Naive thymus-derived CD4-positive, alpha-beta T cell (primary cell): ENCODE measurements at regions of chr14 and their contacts with region 1.

Region 1: GRCh38 chr14:65847075-65847847 is 434.7 kb downstream of the FUT8 start:
- DNase-seq: peak in 8 of 9 donors; percentile 67 to 94 (median 90)
- ATAC-seq: peak; percentile 90
- H3K4me3 ChIP-seq: peak overlapping the region; percentile 38
- H3K4me3 Mint-ChIP-seq: peak overlapping the region; percentile 70 to 88 (median 80)
- H3K27ac ChIP-seq: peak overlapping the region; percentile 74
- H3K27ac Mint-ChIP-seq: peak overlapping the region; percentile 91 to 99 (median 94)
- H3K4me1 ChIP-seq: peaks cover 63 to 85% of the 10 kb centered on the region in 2 donors
- H3K4me1 Mint-ChIP-seq: peaks cover 39 to 92% (median 88%) of the 10 kb centered on the region in 7 donors
- H3K27me3 ChIP-seq: no peaks in the 10 kb centered on the region
- H3K27me3 Mint-ChIP-seq: no peaks in the 10 kb centered on the region

Region 2: GRCh38 chr14:64503478-64504309 is 1343.6 kb before region 1 on chr14 and contains the start of gene ZBTB25:
- CTCF ChIA-PET with region 1: no interaction called
- POLR2A ChIA-PET with region 1: no interaction called
- intact Hi-C with region 1: loop called in 1 of 2 experiments (anchors 2 kb)
- DNase-seq: peak; percentile 88 to 100 (median 98)
- ATAC-seq: peak; percentile 81
- H3K4me3 ChIP-seq: peak within 1 kb of the TSS; percentile 88
- H3K4me3 Mint-ChIP-seq: peak within 1 kb of the TSS; percentile 88 to 100 (median 98)
- H3K27ac ChIP-seq: peak within 1 kb of the TSS; percentile 99
- H3K27ac Mint-ChIP-seq: peak within 1 kb of the TSS; percentile 96 to 100 (median 100)
- H3K4me1 ChIP-seq: peaks cover 41 to 49% of the 10 kb centered on the region in 2 donors
- H3K4me1 Mint-ChIP-seq: peaks cover 44 to 70% (median 55%) of the 10 kb centered on the region in 7 donors
- H3K27me3 ChIP-seq: no peaks in the 10 kb centered on the region
- H3K27me3 Mint-ChIP-seq: peaks cover 0 to 3% (median 0%) of the 10 kb centered on the region in 5 donors
- total RNA-seq, gene ZBTB25: 37.6 to 88.0 (median 60.6) TPM

Region 3: DNA sequence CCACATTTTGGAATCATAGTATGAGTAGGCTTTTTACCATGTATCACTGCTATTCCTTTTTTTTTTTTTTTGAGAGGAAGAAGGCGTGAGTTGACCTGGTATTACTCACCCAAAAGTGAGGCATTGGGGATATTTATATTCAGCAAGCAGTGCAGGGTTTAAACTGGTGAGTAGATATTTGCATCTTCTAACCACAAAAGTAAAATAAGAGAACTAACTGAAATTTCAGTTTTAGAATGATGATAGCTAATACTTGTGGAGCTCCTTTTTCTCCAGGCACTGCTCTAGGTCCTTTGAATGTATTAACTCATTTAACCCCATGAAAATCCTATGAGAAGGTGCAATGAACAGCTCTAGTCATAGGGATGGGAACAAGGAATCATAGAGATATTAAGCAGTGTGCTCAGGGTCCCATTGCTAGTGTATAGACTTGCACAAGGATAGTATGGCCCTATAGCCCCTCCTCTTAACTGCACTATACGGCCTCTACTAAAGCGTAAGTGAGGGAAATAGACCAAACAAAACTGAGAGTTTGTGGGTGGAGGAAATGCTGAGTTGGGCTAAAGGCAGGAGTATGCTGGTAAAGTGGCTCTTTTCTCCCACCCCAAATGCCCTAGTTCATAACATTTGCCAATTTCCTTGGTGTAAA is 640.7 kb before region 1 on chr14:
- CTCF ChIA-PET with region 1: no interaction called
- POLR2A ChIA-PET with region 1: no interaction called
- intact Hi-C with region 1: loop called in 1 of 2 experiments (anchors 5 kb)
- DNase-seq: peak in 1 of 9 donors; percentile 36
- ATAC-seq: peak; percentile 73
- H3K4me3 ChIP-seq: no peak overlapping the region
- H3K4me3 Mint-ChIP-seq: peak overlapping the region in 9 of 10 donors; percentile 41 to 85 (median 70)
- H3K27ac ChIP-seq: peak overlapping the region; percentile 14
- H3K27ac Mint-ChIP-seq: peak overlapping the region; percentile 81 to 93 (median 83)
- H3K4me1 ChIP-seq: peaks cover 40 to 45% of the 10 kb centered on the region in 2 donors
- H3K4me1 Mint-ChIP-seq: peaks cover 35 to 69% (median 58%) of the 10 kb centered on the region in 7 donors
- H3K27me3 ChIP-seq: no peaks in the 10 kb centered on the region
- H3K27me3 Mint-ChIP-seq: no peaks in the 10 kb centered on the region

Region 4: GRCh38 chr14:65604936-65605335 is 242.3 kb before region 1 on chr14:
- CTCF ChIA-PET with region 1: no interaction called
- POLR2A ChIA-PET with region 1: no interaction called
- intact Hi-C with region 1: no loop called
- DNase-seq: no peak
- ATAC-seq: no peak
- H3K4me3 ChIP-seq: no peak overlapping the region
- H3K4me3 Mint-ChIP-seq: no peak overlapping the region
- H3K27ac ChIP-seq: no peak overlapping the region
- H3K27ac Mint-ChIP-seq: no peak overlapping the region
- H3K4me1 ChIP-seq: peaks cover 0 to 8% of the 10 kb centered on the region in 2 donors
- H3K4me1 Mint-ChIP-seq: peaks cover 0 to 29% (median 5%) of the 10 kb centered on the region in 7 donors
- H3K27me3 ChIP-seq: no peaks in the 10 kb centered on the region
- H3K27me3 Mint-ChIP-seq: no peaks in the 10 kb centered on the region

Region 5: DNA sequence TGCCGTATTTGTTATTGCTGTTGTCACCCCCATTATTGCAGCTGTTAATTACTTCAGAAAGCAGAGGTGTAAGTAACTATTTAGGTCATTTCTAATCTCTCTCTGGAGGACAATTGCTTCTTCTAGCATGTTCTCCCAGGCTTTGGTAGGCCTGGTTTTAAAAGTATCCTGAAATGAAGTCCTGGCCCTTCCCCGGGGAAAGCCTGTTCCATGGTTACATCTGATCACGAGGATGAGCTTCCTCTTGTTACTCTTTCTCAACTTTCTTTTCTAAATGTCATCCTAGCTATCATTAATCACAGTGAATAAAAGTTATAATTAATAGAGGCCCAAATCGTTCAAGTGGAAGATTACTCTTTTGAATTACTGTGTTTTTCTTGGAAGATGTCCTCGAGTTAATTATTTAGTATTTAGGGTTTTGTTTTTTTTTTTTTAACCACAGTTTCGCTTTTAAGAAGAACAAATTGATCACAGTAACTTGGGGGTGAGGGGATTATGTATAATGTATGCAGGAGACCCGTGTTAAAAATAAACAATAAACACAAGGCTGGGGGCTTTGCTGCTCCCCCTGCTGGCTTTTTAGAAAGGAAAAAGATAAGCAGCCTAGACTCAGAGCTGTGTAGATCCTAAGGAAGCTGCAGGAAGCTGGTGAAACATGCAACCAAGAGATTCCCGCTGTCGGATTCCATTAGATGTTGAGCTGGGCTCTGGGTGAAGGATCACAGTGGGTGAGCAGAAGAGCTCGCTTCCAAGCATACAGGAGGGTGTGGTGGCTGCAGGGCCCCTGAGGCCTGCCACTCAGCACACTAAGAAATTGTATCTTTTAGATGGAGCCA is 14.6 kb before region 1 on chr14:
- CTCF ChIA-PET with region 1: interaction called, 9 read pairs
- POLR2A ChIA-PET with region 1: interaction called, 11 read pairs
- intact Hi-C with region 1: no loop called
- DNase-seq: no peak
- ATAC-seq: no peak
- H3K4me3 ChIP-seq: no peak overlapping the region
- H3K4me3 Mint-ChIP-seq: no peak overlapping the region
- H3K27ac ChIP-seq: no peak overlapping the region
- H3K27ac Mint-ChIP-seq: peak overlapping the region in 3 of 9 donors; percentile 38 to 51 (median 51)
- H3K4me1 ChIP-seq: peaks cover 0 to 14% of the 10 kb centered on the region in 2 donors
- H3K4me1 Mint-ChIP-seq: peaks cover 19 to 65% (median 50%) of the 10 kb centered on the region in 7 donors
- H3K27me3 ChIP-seq: no peaks in the 10 kb centered on the region
- H3K27me3 Mint-ChIP-seq: peaks cover 0 to 7% (median 0%) of the 10 kb centered on the region in 5 donors

Region 6: GRCh38 chr14:65879248-65880009 is 32.2 kb after region 1 on chr14:
- CTCF ChIA-PET with region 1: interaction called, 3 read pairs
- POLR2A ChIA-PET with region 1: interaction called, 6 read pairs
- intact Hi-C with region 1: loop called (anchors 1 kb)
- DNase-seq: no peak
- ATAC-seq: peak; percentile 26
- H3K4me3 ChIP-seq: no peak overlapping the region
- H3K4me3 Mint-ChIP-seq: peak overlapping the region in 1 of 10 donors; percentile 52
- H3K27ac ChIP-seq: no peak overlapping the region
- H3K27ac Mint-ChIP-seq: peak overlapping the region in 7 of 9 donors; percentile 17 to 89 (median 37)
- H3K4me1 ChIP-seq: peaks cover 0 to 27% of the 10 kb centered on the region in 2 donors
- H3K4me1 Mint-ChIP-seq: peaks cover 5 to 35% (median 26%) of the 10 kb centered on the region in 7 donors
- H3K27me3 ChIP-seq: no peaks in the 10 kb centered on the region
- H3K27me3 Mint-ChIP-seq: peaks cover 0 to 4% (median 0%) of the 10 kb centered on the region in 5 donors

Region 7: GRCh38 chr14:66070509-66071319 is 223.5 kb after region 1 on chr14:
- CTCF ChIA-PET with region 1: no interaction called
- POLR2A ChIA-PET with region 1: no interaction called
- intact Hi-C with region 1: loop called in 1 of 2 experiments (anchors 1 kb)
- DNase-seq: peak; percentile 41 to 76 (median 62)
- ATAC-seq: peak; percentile 91
- H3K4me3 ChIP-seq: no peak overlapping the region
- H3K4me3 Mint-ChIP-seq: no peak overlapping the region
- H3K27ac ChIP-seq: no peak overlapping the region
- H3K27ac Mint-ChIP-seq: peak overlapping the region in 1 of 9 donors; percentile 28
- H3K4me1 ChIP-seq: no peaks in the 10 kb centered on the region
- H3K4me1 Mint-ChIP-seq: peaks cover 4 to 12% (median 8%) of the 10 kb centered on the region in 7 donors
- H3K27me3 ChIP-seq: no peaks in the 10 kb centered on the region
- H3K27me3 Mint-ChIP-seq: peaks cover 0 to 20% (median 6%) of the 10 kb centered on the region in 5 donors